ENCODE measurements at regions of chr17 and their contacts with region 1.

Region 1: GRCh38 chr17:63707151-63707550 is 7.2 kb upstream of the LIMD2 start:
- DNase-seq: no peak
- ATAC-seq: no peak
- H3K4me3 Mint-ChIP-seq: no peak overlapping the region
- H3K27ac Mint-ChIP-seq: peak overlapping the region; percentile 81
- H3K4me1 Mint-ChIP-seq: peaks cover 76% of the 10 kb centered on the region
- H3K27me3 Mint-ChIP-seq: no peaks in the 10 kb centered on the region
- CTCF ChIP-seq: no peak

Region 2: DNA sequence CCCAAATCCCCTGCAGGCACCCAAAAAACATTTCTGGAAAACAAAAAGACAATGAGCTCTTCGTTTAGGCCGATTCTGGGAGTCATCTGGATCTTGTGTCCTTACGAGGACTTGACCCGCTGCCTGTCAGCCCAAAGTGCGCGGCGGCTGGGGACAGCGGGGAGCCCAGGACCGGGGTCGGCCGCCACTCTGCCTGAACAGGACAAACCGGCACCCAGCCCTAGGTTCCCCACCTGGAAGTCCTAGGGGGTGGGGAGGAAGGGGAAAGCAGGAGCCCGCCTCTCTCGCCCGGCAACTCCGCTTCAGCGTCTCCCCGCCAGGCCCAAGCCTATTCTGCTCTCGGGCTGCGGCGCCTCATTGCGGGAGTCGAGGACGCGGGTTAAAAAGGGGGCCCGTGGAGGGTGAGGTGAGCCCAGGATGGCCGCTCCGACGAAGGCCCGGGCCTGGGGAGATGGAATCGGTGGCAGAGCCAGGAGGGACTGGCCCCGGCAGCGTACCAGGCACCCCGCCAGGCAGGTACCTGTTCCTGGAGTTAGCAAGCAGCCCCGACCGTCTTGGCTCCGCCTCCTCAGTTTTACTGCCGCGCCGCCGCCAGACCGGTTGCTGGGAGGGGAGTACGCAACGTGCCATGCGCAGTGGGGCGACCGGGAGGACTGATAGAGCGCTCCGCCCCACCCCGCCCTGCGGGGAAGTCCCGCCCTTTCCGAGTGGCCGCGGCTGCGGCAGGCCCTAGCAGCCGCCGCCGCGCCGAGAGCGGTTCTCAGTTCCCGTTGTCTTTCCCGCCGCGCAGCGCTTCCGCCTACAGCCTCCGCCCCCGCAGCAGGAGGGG is 34.3 kb after region 1 on chr17 and contains the start of gene STRADA:
- CTCF ChIA-PET with region 1: interaction called, 3 read pairs
- POLR2A ChIA-PET with region 1: interaction called, 25 read pairs
- intact Hi-C with region 1: loop called (anchors 5 kb)
- DNase-seq: peak; percentile 99
- ATAC-seq: peak; percentile 96
- H3K4me3 Mint-ChIP-seq: peak within 1 kb of the TSS; percentile 94
- H3K27ac Mint-ChIP-seq: peak within 1 kb of the TSS; percentile 96
- H3K4me1 Mint-ChIP-seq: peaks cover 21% of the 10 kb centered on the region
- H3K27me3 Mint-ChIP-seq: no peaks in the 10 kb centered on the region
- CTCF ChIP-seq: no peak
- total RNA-seq, gene STRADA: 44.8 to 48.8 TPM

Region 3: DNA sequence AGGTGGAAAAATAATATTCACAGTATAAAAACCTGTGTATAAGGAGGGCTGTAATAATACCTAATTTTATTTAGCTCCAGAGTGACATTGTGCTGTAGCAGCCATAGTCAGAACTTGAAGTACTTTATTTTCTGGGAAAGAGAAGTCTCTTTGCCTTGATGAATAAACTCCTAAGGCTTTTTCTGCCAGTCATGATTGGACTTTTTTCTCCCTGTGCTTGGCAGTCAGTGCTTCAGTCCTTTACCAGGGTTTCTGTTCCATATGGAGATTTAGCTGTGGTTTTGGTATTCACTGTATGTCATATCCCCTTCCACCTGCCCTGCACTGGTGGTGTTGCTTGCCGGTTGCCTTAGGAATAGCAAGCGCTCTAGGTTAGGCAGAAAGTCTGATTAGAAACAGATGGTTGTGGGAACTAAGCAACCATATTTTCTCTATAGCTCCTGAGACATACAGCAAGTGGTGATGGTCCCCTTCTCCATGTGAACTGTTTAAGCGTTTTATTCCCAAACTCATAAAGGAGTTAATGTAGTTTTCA is 91.5 kb after region 1 on chr17:
- CTCF ChIA-PET with region 1: no interaction called
- POLR2A ChIA-PET with region 1: no interaction called
- intact Hi-C with region 1: no loop called
- DNase-seq: no peak
- ATAC-seq: no peak
- H3K4me3 Mint-ChIP-seq: no peak overlapping the region
- H3K27ac Mint-ChIP-seq: no peak overlapping the region
- H3K4me1 Mint-ChIP-seq: no peaks in the 10 kb centered on the region
- H3K27me3 Mint-ChIP-seq: no peaks in the 10 kb centered on the region
- CTCF ChIP-seq: no peak